IMR-90 (cell line): ENCODE measurements at regions of chr6 and their contacts with region 1.

Region 1: GRCh38 chr6:10163200-10163962 is 251.5 kb downstream of the TFAP2A start:
- DNase-seq: no peak
- ATAC-seq: no peak
- H3K4me3 ChIP-seq: no peak overlapping the region
- H3K27ac ChIP-seq: no peak overlapping the region
- H3K4me1 ChIP-seq: no peaks in the 10 kb centered on the region
- H3K27me3 ChIP-seq: no peaks in the 10 kb centered on the region
- CTCF ChIP-seq: no peak
- POLR2A ChIP-seq: no peak
- RAD21 ChIP-seq: no peak

Region 2: DNA sequence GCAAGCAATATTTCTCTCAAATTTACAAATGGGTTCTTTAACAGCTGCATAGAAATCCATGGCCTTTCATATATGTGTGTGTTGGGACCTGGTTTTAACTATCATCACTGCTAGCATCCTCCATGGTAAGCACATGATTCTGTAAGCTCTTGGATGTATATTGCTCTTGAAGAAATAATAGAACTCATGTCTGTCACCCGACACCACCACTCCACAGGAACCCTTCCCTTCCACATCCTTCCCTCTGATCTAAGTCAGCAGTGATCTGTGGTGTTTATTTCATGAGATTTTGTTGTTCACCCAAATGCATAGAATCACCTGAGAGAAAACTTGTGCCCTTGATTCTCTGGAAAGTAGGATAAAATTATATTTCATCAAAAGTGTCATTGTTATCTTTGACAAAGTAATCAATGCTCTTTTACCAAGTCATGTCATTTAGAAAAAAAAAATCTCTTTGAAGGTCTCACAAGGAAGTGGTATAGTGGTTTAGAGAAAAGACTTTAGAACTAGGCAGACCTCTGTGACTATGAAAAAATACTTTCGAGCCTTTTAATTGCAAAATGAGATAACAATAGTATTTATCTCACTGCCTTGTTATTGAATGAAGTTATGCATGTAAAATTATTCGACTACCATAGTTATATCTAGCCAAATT is 1078.2 kb before region 1 on chr6:
- CTCF ChIA-PET with region 1: no interaction called
- POLR2A ChIA-PET with region 1: no interaction called
- dilution Hi-C with region 1: no loop called
- in situ Hi-C with region 1: no loop called
- intact Hi-C with region 1: loop called (anchors 2 kb)
- DNase-seq: no peak
- ATAC-seq: no peak
- H3K4me3 ChIP-seq: no peak overlapping the region
- H3K27ac ChIP-seq: no peak overlapping the region
- H3K4me1 ChIP-seq: no peaks in the 10 kb centered on the region
- H3K27me3 ChIP-seq: no peaks in the 10 kb centered on the region
- CTCF ChIP-seq: no peak
- POLR2A ChIP-seq: no peak
- RAD21 ChIP-seq: no peak

Region 3: GRCh38 chr6:10837995-10838793 is 674.8 kb after region 1 on chr6 and contains the start of gene MAK:
- CTCF ChIA-PET with region 1: no interaction called
- POLR2A ChIA-PET with region 1: no interaction called
- dilution Hi-C with region 1: no loop called
- in situ Hi-C with region 1: no loop called
- intact Hi-C with region 1: no loop called
- DNase-seq: peak; percentile 67
- ATAC-seq: peak; percentile 99
- H3K4me3 ChIP-seq: peak within 1 kb of the TSS; percentile 65
- H3K27ac ChIP-seq: no peak within 1 kb of the TSS
- H3K4me1 ChIP-seq: peaks cover 3% of the 10 kb centered on the region; the same call in 1 of the 2 replicates
- H3K27me3 ChIP-seq: peaks cover 30% of the 10 kb centered on the region
- CTCF ChIP-seq: no peak
- POLR2A ChIP-seq: no peak
- RAD21 ChIP-seq: no peak
- total RNA-seq, gene MAK: under 0.01 TPM in 1 of 2 replicates, not detected in the other

Region 4: DNA sequence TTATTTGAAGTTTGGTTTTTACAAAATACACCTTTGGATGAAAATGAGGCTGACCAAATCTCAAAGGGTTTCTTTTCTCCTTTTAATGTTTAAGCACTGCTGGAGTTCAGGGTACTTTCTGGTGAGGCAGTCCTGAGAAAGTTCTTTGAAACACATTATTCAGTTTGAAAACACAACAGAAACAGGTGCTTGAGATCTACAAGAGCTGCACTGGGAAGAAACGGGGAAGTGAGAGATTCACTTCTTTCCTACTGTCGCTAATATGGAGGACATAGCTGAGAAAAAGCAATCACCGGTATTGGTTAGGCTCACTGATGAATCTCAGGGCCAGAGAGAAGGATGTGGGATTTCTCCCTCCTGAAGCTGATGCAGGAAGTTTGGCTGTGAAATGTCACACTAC is 1351.3 kb after region 1 on chr6:
- CTCF ChIA-PET with region 1: no interaction called
- POLR2A ChIA-PET with region 1: interaction called, 14 read pairs
- dilution Hi-C with region 1: no loop called
- in situ Hi-C with region 1: no loop called
- intact Hi-C with region 1: no loop called
- DNase-seq: no peak
- ATAC-seq: no peak
- H3K4me3 ChIP-seq: no peak overlapping the region
- H3K27ac ChIP-seq: no peak overlapping the region
- H3K4me1 ChIP-seq: no peaks in the 10 kb centered on the region
- H3K27me3 ChIP-seq: peaks cover 12% of the 10 kb centered on the region
- CTCF ChIP-seq: no peak
- POLR2A ChIP-seq: no peak
- RAD21 ChIP-seq: no peak